PC-9 (cell line): ENCODE measurements at regions of chr6 and their contacts with region 1.

Region 1: GRCh38 chr6:4606821-4607704 is 169.1 kb upstream of the CDYL start:
- DNase-seq: peak; percentile 70 to 89
- H3K4me3 ChIP-seq: peak overlapping the region; percentile 57
- H3K27ac ChIP-seq: peak overlapping the region; percentile 86
- H3K4me1 ChIP-seq: peaks cover 33% of the 10 kb centered on the region
- H3K27me3 ChIP-seq: no peaks in the 10 kb centered on the region
- CTCF ChIP-seq: no peak

Region 2: GRCh38 chr6:4319981-4320683 is 286.9 kb before region 1 on chr6:
- CTCF ChIA-PET with region 1: no interaction called
- POLR2A ChIA-PET with region 1: no interaction called
- intact Hi-C with region 1: loop called (anchors 1 kb)
- DNase-seq: peak; percentile 38 to 84
- H3K4me3 ChIP-seq: no peak overlapping the region
- H3K27ac ChIP-seq: peak overlapping the region; percentile 97
- H3K4me1 ChIP-seq: peaks cover 56% of the 10 kb centered on the region
- H3K27me3 ChIP-seq: no peaks in the 10 kb centered on the region
- CTCF ChIP-seq: no peak

Region 3: DNA sequence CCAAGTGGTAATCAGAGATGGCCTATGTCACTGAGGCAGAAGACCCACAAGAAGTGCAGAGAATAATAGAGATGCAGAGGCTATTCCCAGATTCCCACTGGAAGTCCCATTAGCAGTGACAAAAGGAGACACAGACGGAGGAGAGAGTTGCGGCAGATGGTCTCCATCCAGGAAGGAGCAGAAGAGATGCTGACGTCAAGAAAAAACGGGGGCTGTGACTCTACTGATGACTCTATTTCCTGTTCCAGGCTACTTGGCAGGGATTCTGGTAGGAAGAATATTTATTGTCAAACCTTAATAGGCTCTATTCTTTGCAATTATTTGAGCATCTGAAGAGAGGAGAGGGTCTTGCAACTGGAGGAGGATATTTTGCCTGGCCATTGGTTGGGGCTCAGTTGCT is 225.7 kb before region 1 on chr6:
- CTCF ChIA-PET with region 1: no interaction called
- POLR2A ChIA-PET with region 1: no interaction called
- intact Hi-C with region 1: loop called (anchors 10 kb)
- DNase-seq: no peak
- H3K4me3 ChIP-seq: no peak overlapping the region
- H3K27ac ChIP-seq: no peak overlapping the region
- H3K4me1 ChIP-seq: no peaks in the 10 kb centered on the region
- H3K27me3 ChIP-seq: no peaks in the 10 kb centered on the region
- CTCF ChIP-seq: no peak

Region 4: GRCh38 chr6:4707011-4707410 is 99.9 kb after region 1 on chr6:
- CTCF ChIA-PET with region 1: no interaction called
- POLR2A ChIA-PET with region 1: no interaction called
- intact Hi-C with region 1: loop called (anchors 1 kb)
- DNase-seq: peak; percentile 56 to 88
- H3K4me3 ChIP-seq: no peak overlapping the region
- H3K27ac ChIP-seq: peak overlapping the region; percentile 34; the same call in 1 of the 2 replicates
- H3K4me1 ChIP-seq: peaks cover 11% of the 10 kb centered on the region
- H3K27me3 ChIP-seq: no peaks in the 10 kb centered on the region
- CTCF ChIP-seq: no peak

Region 5: DNA sequence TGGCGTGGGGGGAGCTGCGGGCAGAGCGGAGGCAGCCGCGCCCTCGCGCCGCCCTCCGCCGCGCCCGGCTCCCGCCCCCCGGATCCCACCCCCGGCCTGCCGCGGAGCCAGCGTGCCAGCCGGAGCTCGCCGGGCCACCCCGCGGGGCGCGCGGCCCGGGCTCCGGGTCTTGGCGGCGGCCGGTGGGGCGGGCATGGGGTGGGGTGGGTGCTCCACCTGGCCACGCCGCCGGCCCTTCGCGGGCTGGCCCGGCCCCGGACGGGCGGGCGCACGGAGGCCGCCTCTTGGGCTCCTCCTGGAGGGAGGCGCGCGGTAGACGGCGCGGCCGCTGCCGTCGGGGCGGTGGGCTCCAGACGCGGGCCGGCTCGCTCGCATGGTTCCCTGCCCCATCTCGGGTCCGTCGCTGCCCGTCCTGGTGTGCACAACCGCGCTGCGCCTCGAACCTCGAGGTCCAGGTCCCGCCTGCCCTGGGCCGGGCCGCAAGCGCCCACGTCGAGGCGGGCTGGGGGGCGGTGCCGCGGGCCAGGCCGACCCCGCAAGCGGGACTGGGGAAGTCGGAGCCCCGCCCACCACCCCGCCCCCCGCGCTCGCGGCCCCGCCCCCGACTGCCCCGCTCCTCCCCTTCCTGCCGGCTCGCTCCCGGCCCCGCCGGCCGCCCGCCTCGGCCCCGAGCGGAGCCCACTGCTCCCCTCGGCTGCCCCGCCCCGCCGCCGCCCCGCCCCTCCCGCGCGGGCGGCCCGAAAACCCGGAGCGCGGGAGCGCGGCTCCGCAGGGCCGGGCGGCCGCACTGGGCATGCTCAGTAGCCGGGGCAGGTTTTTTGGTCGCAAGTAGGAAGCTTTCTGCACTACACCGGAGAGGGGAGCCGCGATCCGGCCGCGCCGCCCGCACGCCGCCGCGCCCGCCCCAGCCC is 168.8 kb after region 1 on chr6 and contains the start of gene CDYL:
- CTCF ChIA-PET with region 1: no interaction called
- POLR2A ChIA-PET with region 1: interaction called, 6 read pairs
- intact Hi-C with region 1: loop called (anchors 2 kb)
- DNase-seq: peak in 1 of 2 experiments; percentile 92
- H3K4me3 ChIP-seq: peak within 1 kb of the TSS; percentile 59; the same call in 1 of the 2 replicates
- H3K27ac ChIP-seq: no peak within 1 kb of the TSS
- H3K4me1 ChIP-seq: no peaks in the 10 kb centered on the region
- H3K27me3 ChIP-seq: no peaks in the 10 kb centered on the region
- CTCF ChIP-seq: no peak
- total RNA-seq, gene CDYL: 52.7 and 60.8 TPM in 2 replicates

Region 6: GRCh38 chr6:4941782-4942672 is 335.0 kb after region 1 on chr6:
- CTCF ChIA-PET with region 1: no interaction called
- POLR2A ChIA-PET with region 1: no interaction called
- intact Hi-C with region 1: loop called (anchors 5 kb)
- DNase-seq: peak; percentile 80 to 89
- H3K4me3 ChIP-seq: no peak overlapping the region
- H3K27ac ChIP-seq: peak overlapping the region; percentile 66
- H3K4me1 ChIP-seq: peaks cover 32% of the 10 kb centered on the region
- H3K27me3 ChIP-seq: no peaks in the 10 kb centered on the region
- CTCF ChIP-seq: no peak